PC-3 (cell line): ENCODE measurements at regions of chr1 and their contacts with region 1.

Region 1: DNA sequence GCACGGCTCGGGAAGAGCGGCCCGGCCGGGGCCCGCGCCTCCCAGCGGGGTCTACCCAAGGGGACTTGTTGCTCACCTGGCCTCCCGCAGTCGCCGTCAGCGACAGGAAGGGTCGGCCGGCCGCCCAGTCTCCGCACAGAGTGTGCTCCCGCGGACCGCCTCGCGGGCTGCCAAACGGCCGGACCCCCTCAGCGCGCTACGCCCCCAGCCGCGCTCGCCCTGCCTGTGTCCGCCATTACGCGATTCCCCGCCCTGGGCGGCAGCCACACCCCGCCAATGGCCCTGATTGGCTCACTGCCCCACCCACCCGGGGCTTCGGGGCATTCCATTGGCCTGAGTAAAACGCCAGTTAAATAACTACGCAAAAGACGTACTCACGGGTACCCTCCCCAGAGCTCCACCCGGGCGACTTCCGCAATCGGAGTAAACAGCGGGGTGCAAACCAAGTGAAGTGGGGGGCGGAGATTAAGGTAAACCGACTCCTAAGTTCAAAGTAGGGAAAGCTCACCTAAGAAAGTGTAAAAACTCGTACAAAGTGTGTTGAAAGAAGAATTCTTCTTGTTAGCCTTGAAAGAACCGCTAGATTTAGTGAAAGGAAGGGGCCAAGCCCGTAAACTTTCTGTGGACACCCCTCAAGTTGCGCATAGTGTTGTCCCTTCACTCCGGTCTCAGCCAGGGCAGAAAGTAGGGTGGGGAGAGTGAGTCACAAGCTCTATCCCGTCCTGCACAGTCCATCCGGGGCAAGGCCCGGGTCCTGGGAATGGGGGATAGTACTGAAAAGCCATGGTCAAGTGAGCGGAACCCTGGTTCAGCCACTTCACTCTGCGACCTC is at the start of gene WASF2:
- DNase-seq: peak; percentile 98
- ATAC-seq: peak; percentile 91
- H3K4me3 ChIP-seq: peak within 1 kb of the TSS; percentile 93
- H3K27ac ChIP-seq: peak within 1 kb of the TSS; percentile 82
- H3K4me1 ChIP-seq: peaks cover 17% of the 10 kb centered on the region
- H3K27me3 ChIP-seq: no peaks in the 10 kb centered on the region
- CTCF ChIP-seq: no peak
- total RNA-seq, gene WASF2: 20.7 and 32.4 TPM in 2 replicates

Region 2: GRCh38 chr1:27267153-27267552 is 223.0 kb before region 1 on chr1:
- CTCF ChIA-PET with region 1: interaction called, 12 read pairs
- POLR2A ChIA-PET with region 1: no interaction called
- intact Hi-C with region 1: no loop called
- DNase-seq: no peak
- ATAC-seq: no peak
- H3K4me3 ChIP-seq: no peak overlapping the region
- H3K27ac ChIP-seq: no peak overlapping the region
- H3K4me1 ChIP-seq: no peaks in the 10 kb centered on the region
- H3K27me3 ChIP-seq: no peaks in the 10 kb centered on the region
- CTCF ChIP-seq: no peak

Region 3: DNA sequence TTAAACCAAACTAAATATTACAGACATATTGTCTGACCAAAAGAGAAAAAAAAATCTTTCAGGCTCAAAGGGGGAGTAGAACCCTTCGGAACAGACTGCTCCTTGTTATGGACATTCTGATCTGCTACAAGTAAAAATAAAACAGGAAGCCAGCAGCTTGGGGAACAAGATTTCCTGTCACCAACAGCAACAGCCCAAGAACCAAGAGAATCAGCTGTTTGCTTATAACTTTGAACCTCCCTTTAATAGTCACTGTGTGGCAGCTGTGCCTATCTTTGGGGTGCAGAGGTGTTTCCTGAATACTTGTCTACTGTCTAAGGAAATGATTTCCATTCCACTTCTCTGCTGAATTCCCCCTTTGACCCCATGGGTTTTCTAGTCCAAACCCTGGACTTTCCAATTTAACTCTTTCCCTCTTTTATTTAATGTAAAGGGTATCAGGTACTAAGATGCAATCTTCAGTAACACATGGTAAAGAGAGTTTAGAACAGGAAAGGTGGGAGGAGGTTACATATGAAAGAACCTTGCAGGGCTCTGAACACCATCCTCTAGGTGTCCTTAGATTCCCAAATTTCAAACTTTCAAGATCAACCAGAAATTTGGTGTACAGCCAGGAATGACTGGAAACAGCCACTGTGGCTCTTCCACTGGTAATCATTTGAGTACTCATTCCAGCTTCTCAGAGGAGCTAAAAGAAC is 59.1 kb before region 1 on chr1:
- CTCF ChIA-PET with region 1: no interaction called
- POLR2A ChIA-PET with region 1: no interaction called
- intact Hi-C with region 1: loop called (anchors 5 kb)
- DNase-seq: peak; percentile 14
- ATAC-seq: no peak; the same call in 1 of the 2 replicates
- H3K4me3 ChIP-seq: no peak overlapping the region
- H3K27ac ChIP-seq: no peak overlapping the region
- H3K4me1 ChIP-seq: peaks cover 2% of the 10 kb centered on the region
- H3K27me3 ChIP-seq: no peaks in the 10 kb centered on the region
- CTCF ChIP-seq: no peak